Activated B cell treated with CpG ODN at 0.5 μM for 24 hours (primary cell): ENCODE measurements at regions of chr17 and their contacts with region 1.

Region 1: GRCh38 chr17:27601069-27601975 is 29.7 kb upstream of the LGALS9 start:
- DNase-seq: peak; percentile 71
- ATAC-seq: peak; percentile 64
- H3K4me3 Mint-ChIP-seq: no peak overlapping the region
- H3K27ac Mint-ChIP-seq: no peak overlapping the region
- H3K4me1 Mint-ChIP-seq: peaks cover 2% of the 10 kb centered on the region
- H3K27me3 Mint-ChIP-seq: no peaks in the 10 kb centered on the region
- CTCF ChIP-seq: no peak

Region 2: GRCh38 chr17:27245230-27245696 is 356.1 kb before region 1 on chr17:
- CTCF ChIA-PET with region 1: interaction called, 51 read pairs
- POLR2A ChIA-PET with region 1: interaction called, 3 read pairs
- intact Hi-C with region 1: loop called (anchors 1 kb)
- DNase-seq: peak; percentile 36
- ATAC-seq: peak; percentile 91
- H3K4me3 Mint-ChIP-seq: no peak overlapping the region
- H3K27ac Mint-ChIP-seq: no peak overlapping the region
- H3K4me1 Mint-ChIP-seq: peaks cover 28% of the 10 kb centered on the region
- H3K27me3 Mint-ChIP-seq: no peaks in the 10 kb centered on the region
- CTCF ChIP-seq: peak; percentile 27

Region 3: GRCh38 chr17:27353461-27354050 is 247.8 kb before region 1 on chr17:
- CTCF ChIA-PET with region 1: interaction called, 90 read pairs
- POLR2A ChIA-PET with region 1: interaction called, 4 read pairs
- intact Hi-C with region 1: loop called (anchors 1 kb)
- DNase-seq: peak; percentile 90
- ATAC-seq: peak; percentile 87
- H3K4me3 Mint-ChIP-seq: peak overlapping the region; percentile 89
- H3K27ac Mint-ChIP-seq: peak overlapping the region; percentile 83
- H3K4me1 Mint-ChIP-seq: peaks cover 22% of the 10 kb centered on the region
- H3K27me3 Mint-ChIP-seq: no peaks in the 10 kb centered on the region
- CTCF ChIP-seq: peak; percentile 50

Region 4: GRCh38 chr17:27455914-27456680 is 145.2 kb before region 1 on chr17 and contains the start of gene KSR1:
- CTCF ChIA-PET with region 1: interaction called, 68 read pairs
- POLR2A ChIA-PET with region 1: interaction called, 9 read pairs
- intact Hi-C with region 1: loop called (anchors 1 kb)
- DNase-seq: peak; percentile 81
- ATAC-seq: peak; percentile 94
- H3K4me3 Mint-ChIP-seq: peak within 1 kb of the TSS; percentile 92
- H3K27ac Mint-ChIP-seq: peak within 1 kb of the TSS; percentile 78
- H3K4me1 Mint-ChIP-seq: peaks cover 22% of the 10 kb centered on the region
- H3K27me3 Mint-ChIP-seq: no peaks in the 10 kb centered on the region
- CTCF ChIP-seq: no peak
- total RNA-seq, gene KSR1: 90.1 and 114 TPM in 2 replicates

Region 5: DNA sequence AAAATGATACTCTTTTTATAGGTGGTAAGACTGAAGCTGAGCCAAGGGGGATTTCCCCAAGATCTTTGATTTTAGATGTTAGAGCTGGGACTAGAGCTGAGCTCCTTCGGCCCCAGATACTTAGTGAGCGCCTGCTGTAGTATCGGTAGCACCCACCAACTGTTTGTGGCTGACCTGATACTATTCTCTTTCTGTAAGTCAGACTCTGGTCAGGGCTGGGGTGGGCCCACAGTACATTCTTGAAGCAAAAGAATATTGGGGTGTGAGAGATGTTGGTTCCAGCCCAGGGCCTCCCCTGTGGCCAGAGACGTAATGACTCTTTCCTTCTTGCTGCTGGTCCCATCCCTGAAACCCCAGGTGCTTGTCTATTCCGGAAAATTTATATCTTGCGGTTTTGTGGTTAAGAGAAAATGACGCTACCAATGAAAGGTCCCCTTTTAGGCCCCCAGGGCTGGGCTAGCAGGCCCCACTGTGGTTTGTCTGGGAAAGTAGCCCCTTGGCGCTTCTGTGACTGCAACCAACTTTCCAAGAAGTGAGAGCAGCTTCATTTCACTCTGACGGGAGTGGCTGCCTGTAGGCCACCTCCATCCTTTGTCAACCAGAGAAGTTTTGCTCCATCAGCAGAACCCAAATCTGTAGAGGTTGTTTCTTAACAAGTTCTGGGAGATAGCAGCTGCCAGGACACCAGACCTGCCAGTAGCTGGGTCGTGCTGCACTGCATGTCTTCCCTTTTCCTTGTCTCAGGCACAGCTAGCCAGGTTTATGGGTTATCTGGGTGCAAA is 56.8 kb before region 1 on chr17:
- CTCF ChIA-PET with region 1: interaction called, 16 read pairs
- POLR2A ChIA-PET with region 1: no interaction called
- intact Hi-C with region 1: no loop called
- DNase-seq: peak; percentile 48
- ATAC-seq: peak; percentile 74
- H3K4me3 Mint-ChIP-seq: peak overlapping the region; percentile 72
- H3K27ac Mint-ChIP-seq: peak overlapping the region; percentile 90
- H3K4me1 Mint-ChIP-seq: peaks cover 76% of the 10 kb centered on the region
- H3K27me3 Mint-ChIP-seq: no peaks in the 10 kb centered on the region
- CTCF ChIP-seq: no peak

Region 6: GRCh38 chr17:27586203-27586721 is 15.1 kb before region 1 on chr17:
- CTCF ChIA-PET with region 1: interaction called, 10 read pairs
- POLR2A ChIA-PET with region 1: no interaction called
- intact Hi-C with region 1: no loop called
- DNase-seq: no peak
- ATAC-seq: no peak
- H3K4me3 Mint-ChIP-seq: no peak overlapping the region
- H3K27ac Mint-ChIP-seq: no peak overlapping the region
- H3K4me1 Mint-ChIP-seq: peaks cover 18% of the 10 kb centered on the region
- H3K27me3 Mint-ChIP-seq: no peaks in the 10 kb centered on the region
- CTCF ChIP-seq: no peak

Region 7: DNA sequence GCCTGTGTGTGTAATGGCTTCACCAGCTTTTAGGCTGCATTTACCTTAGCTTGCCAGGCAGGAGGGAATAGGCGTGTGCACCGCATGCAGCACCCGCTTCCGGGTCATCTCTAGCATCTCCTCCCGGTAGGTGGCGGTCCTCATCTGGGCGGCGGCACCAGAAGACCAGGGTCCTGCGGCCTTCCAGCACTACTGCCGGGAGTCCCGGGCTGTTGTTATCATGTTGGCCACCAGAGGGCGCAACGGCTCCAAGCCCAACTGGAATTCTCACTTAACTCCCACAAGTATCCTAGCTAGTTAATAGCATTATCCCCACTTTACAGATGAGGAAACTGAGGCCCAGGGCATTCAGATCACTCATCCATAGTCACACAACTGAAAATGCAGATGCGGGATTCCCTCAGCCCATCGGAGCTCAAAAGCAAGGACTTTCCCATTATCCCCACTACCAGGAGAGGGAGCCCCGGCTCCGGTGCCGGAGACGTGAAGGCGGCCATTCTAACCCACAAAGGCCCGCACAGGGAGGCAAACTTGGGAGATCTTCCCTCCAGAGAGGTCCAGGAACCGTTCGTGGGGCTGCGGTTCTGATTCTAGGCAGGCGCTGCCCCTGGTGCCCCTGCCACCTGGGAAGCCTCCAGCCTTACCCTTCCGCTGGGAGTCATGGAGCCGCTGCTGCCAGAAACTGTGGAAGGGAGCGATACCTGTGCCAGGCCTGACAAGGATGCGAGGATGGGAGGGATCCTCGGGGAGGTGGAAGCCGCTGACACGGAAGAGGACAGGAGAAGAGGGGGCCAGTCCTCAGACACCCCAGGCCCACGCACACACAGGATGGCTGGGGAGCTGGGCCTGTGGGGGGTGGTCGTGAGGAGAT is 53.6 kb after region 1 on chr17:
- CTCF ChIA-PET with region 1: interaction called, 112 read pairs
- POLR2A ChIA-PET with region 1: no interaction called
- intact Hi-C with region 1: loop called (anchors 1 kb)
- DNase-seq: peak; percentile 61
- ATAC-seq: peak; percentile 91
- H3K4me3 Mint-ChIP-seq: no peak overlapping the region
- H3K27ac Mint-ChIP-seq: no peak overlapping the region
- H3K4me1 Mint-ChIP-seq: peaks cover 8% of the 10 kb centered on the region
- H3K27me3 Mint-ChIP-seq: peaks cover 2% of the 10 kb centered on the region
- CTCF ChIP-seq: peak; percentile 97

Region 8: GRCh38 chr17:27846042-27846655 is 244.8 kb after region 1 on chr17:
- CTCF ChIA-PET with region 1: no interaction called
- POLR2A ChIA-PET with region 1: no interaction called
- intact Hi-C with region 1: no loop called
- DNase-seq: no peak
- ATAC-seq: no peak
- H3K4me3 Mint-ChIP-seq: peak overlapping the region; percentile 80
- H3K27ac Mint-ChIP-seq: no peak overlapping the region
- H3K4me1 Mint-ChIP-seq: peaks cover 15% of the 10 kb centered on the region
- H3K27me3 Mint-ChIP-seq: peaks cover 20% of the 10 kb centered on the region
- CTCF ChIP-seq: no peak